CD4-positive, alpha-beta memory T cell (primary cell): ENCODE measurements at regions of chr12 and their contacts with region 1.

Region 1: GRCh38 chr12:67648521-67649260 is at the start of gene DYRK2:
- DNase-seq: peak; percentile 75 to 79 (median 77)
- H3K4me3 ChIP-seq: peak within 1 kb of the TSS; percentile 42 to 84
- H3K4me3 Mint-ChIP-seq: peak within 1 kb of the TSS; percentile 84 to 100 (median 98)
- H3K27ac ChIP-seq: peak within 1 kb of the TSS; percentile 69
- H3K27ac Mint-ChIP-seq: peak within 1 kb of the TSS; percentile 89 to 98 (median 94)
- H3K4me1 ChIP-seq: peaks cover 34% of the 10 kb centered on the region
- H3K4me1 Mint-ChIP-seq: peaks cover 28 to 46% (median 32%) of the 10 kb centered on the region in 4 donors
- H3K27me3 ChIP-seq: no peaks in the 10 kb centered on the region
- H3K27me3 Mint-ChIP-seq: no peaks in the 10 kb centered on the region
- total RNA-seq, gene DYRK2: 167 to 170 TPM

Region 2: GRCh38 chr12:67355578-67356379 is 292.9 kb before region 1 on chr12:
- CTCF ChIA-PET with region 1: interaction called, 10 read pairs
- POLR2A ChIA-PET with region 1: interaction called, 4 read pairs
- intact Hi-C with region 1: loop called (anchors 2 kb)
- DNase-seq: peak; percentile 37 to 55 (median 52)
- H3K4me3 ChIP-seq: no peak overlapping the region
- H3K4me3 Mint-ChIP-seq: peak overlapping the region in 4 of 8 donors; percentile 39 to 63 (median 48)
- H3K27ac ChIP-seq: no peak overlapping the region
- H3K27ac Mint-ChIP-seq: peak overlapping the region in 2 of 7 donors; percentile 3 to 27
- H3K4me1 ChIP-seq: peaks cover 12% of the 10 kb centered on the region
- H3K4me1 Mint-ChIP-seq: peaks cover 7 to 16% (median 10%) of the 10 kb centered on the region in 4 donors
- H3K27me3 ChIP-seq: no peaks in the 10 kb centered on the region
- H3K27me3 Mint-ChIP-seq: no peaks in the 10 kb centered on the region

Region 3: GRCh38 chr12:67482751-67483671 is 165.7 kb before region 1 on chr12:
- CTCF ChIA-PET with region 1: interaction called, 4 read pairs
- POLR2A ChIA-PET with region 1: interaction called, 56 read pairs
- intact Hi-C with region 1: loop called (anchors 1 kb)
- DNase-seq: peak; percentile 77 to 86 (median 85)
- H3K4me3 ChIP-seq: no peak overlapping the region
- H3K4me3 Mint-ChIP-seq: peak overlapping the region in 7 of 8 donors; percentile 40 to 83 (median 54)
- H3K27ac ChIP-seq: peak overlapping the region; percentile 36
- H3K27ac Mint-ChIP-seq: peak overlapping the region; percentile 85 to 96 (median 93)
- H3K4me1 ChIP-seq: peaks cover 51% of the 10 kb centered on the region
- H3K4me1 Mint-ChIP-seq: peaks cover 38 to 46% (median 42%) of the 10 kb centered on the region in 4 donors
- H3K27me3 ChIP-seq: no peaks in the 10 kb centered on the region
- H3K27me3 Mint-ChIP-seq: no peaks in the 10 kb centered on the region

Region 4: DNA sequence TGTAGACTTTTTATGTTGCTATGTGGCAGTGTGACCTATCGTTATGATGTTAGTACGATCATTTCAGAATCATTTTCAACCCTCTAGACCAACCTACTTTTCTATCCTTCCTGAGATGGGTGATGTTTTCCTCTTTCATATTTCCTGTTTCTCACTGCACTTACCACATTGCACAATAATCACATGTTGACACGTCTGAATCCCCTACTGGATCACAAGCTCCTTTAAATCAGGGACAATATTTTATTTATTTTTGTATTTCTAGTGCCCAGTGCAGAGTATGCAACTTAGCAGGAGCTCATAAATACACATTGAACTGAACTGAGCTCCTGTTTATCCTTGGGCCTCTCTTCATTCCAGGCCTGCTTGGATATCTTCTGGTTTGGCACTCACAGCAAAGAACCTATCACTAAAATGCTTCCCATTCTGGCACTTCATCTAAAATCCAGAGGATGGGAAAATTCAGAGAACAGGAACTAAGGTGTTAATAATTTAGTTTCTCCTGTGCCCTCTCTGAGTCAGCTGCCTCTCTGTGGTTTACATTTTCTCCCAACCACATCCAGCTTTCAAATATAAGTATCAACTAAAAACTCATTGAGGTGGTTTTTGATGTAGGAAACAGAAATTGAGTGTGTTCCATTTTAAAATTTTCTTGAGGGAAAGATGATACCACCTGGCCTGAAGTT is 69.6 kb before region 1 on chr12:
- CTCF ChIA-PET with region 1: interaction called, 8 read pairs
- POLR2A ChIA-PET with region 1: interaction called, 43 read pairs
- intact Hi-C with region 1: loop called (anchors 1 kb)
- DNase-seq: peak; percentile 57 to 75 (median 66)
- H3K4me3 ChIP-seq: peak overlapping the region; percentile 2 to 8
- H3K4me3 Mint-ChIP-seq: peak overlapping the region in 7 of 8 donors; percentile 75 to 89 (median 79)
- H3K27ac ChIP-seq: no peak overlapping the region
- H3K27ac Mint-ChIP-seq: peak overlapping the region; percentile 55 to 89 (median 82)
- H3K4me1 ChIP-seq: peaks cover 49% of the 10 kb centered on the region
- H3K4me1 Mint-ChIP-seq: peaks cover 41 to 65% (median 50%) of the 10 kb centered on the region in 4 donors
- H3K27me3 ChIP-seq: no peaks in the 10 kb centered on the region
- H3K27me3 Mint-ChIP-seq: no peaks in the 10 kb centered on the region

Region 5: DNA sequence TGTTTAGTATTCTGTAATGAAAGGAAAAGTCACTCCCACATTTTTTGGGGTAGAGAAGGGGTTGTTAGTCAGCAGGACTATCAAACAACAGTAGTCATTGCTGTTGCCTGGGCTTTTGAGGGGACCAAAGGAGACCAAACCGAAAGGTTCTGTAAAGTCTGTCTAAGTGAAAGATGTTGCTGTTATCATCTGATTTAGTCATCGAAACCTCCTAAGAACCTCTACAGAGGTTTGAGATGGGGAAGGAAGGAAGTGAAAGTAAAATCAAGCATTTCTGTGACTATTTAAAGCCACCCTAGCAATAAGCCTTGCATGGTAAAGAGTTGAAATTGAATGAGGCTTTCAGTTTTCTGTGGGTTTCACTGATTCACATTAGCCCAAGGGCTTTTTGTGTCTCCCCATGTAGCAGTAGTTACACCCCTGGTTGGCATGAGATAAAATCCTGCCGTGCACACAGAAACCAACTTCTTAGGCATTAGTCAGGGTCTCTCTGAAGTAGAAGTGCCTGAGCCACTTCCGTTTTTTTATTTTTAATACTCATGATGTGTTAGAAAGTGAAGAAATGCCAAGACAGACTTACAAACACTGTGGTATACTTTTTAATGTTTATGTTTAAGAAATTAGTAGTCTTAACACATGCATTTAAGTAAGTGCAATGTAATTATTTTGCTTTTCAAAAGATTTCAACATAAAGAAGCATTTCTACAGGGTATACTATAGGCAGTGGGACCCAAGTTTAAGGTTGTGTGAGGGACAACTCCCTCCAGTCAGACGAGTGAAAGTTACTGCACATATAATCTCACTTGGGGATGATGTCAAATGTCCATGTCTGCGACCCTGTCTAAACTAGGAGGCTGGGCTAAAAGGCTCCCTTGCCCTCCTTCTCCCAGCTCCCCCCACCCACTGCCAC is 50.2 kb after region 1 on chr12:
- CTCF ChIA-PET with region 1: no interaction called
- POLR2A ChIA-PET with region 1: interaction called, 13 read pairs
- intact Hi-C with region 1: loop called (anchors 2 kb)
- DNase-seq: peak; percentile 43 to 74 (median 51)
- H3K4me3 ChIP-seq: peak overlapping the region; percentile 18 to 53
- H3K4me3 Mint-ChIP-seq: peak overlapping the region; percentile 78 to 88 (median 85)
- H3K27ac ChIP-seq: peak overlapping the region; percentile 5
- H3K27ac Mint-ChIP-seq: peak overlapping the region; percentile 71 to 95 (median 90)
- H3K4me1 ChIP-seq: peaks cover 43% of the 10 kb centered on the region
- H3K4me1 Mint-ChIP-seq: peaks cover 40 to 59% (median 50%) of the 10 kb centered on the region in 4 donors
- H3K27me3 ChIP-seq: no peaks in the 10 kb centered on the region
- H3K27me3 Mint-ChIP-seq: peaks cover 0 to 2% of the 10 kb centered on the region in 2 donors